ENCODE measurements at regions of chr15 and their contacts with region 1.

Region 1: GRCh38 chr15:43285609-43286037 is 18.9 kb upstream of the TGM5 start:
- DNase-seq: peak; percentile 80
- H3K4me3 ChIP-seq: peak overlapping the region in 1 of 2 experiments; percentile 4; a peak in 1 of 4 replicates
- H3K27ac ChIP-seq: no peak overlapping the region
- H3K4me1 ChIP-seq: no peaks in the 10 kb centered on the region
- H3K27me3 ChIP-seq: peaks cover 16% of the 10 kb centered on the region; the same call in 1 of the 2 replicates
- CTCF ChIP-seq: peak; percentile 87
- EP300 ChIP-seq: no peak
- RAD21 ChIP-seq: peak; percentile 98

Region 2: GRCh38 chr15:43185157-43186017 is 100.2 kb before region 1 on chr15 and contains the start of gene CCNDBP1:
- CTCF ChIA-PET with region 1: interaction called, 44 read pairs
- POLR2A ChIA-PET with region 1: no interaction called
- DNase-seq: peak; percentile 97
- H3K4me3 ChIP-seq: peak within 1 kb of the TSS; percentile 75 to 88
- H3K27ac ChIP-seq: peak within 1 kb of the TSS; percentile 47 to 89
- H3K4me1 ChIP-seq: peaks cover 0 to 10% of the 10 kb centered on the region in 2 experiments; a peak in 3 of 4 replicates
- H3K27me3 ChIP-seq: no peaks in the 10 kb centered on the region
- CTCF ChIP-seq: peak; percentile 59
- EP300 ChIP-seq: no peak
- RAD21 ChIP-seq: no peak
- polyA plus RNA-seq, gene CCNDBP1: 63.6 and 81.7 TPM in 2 replicates

Region 3: DNA sequence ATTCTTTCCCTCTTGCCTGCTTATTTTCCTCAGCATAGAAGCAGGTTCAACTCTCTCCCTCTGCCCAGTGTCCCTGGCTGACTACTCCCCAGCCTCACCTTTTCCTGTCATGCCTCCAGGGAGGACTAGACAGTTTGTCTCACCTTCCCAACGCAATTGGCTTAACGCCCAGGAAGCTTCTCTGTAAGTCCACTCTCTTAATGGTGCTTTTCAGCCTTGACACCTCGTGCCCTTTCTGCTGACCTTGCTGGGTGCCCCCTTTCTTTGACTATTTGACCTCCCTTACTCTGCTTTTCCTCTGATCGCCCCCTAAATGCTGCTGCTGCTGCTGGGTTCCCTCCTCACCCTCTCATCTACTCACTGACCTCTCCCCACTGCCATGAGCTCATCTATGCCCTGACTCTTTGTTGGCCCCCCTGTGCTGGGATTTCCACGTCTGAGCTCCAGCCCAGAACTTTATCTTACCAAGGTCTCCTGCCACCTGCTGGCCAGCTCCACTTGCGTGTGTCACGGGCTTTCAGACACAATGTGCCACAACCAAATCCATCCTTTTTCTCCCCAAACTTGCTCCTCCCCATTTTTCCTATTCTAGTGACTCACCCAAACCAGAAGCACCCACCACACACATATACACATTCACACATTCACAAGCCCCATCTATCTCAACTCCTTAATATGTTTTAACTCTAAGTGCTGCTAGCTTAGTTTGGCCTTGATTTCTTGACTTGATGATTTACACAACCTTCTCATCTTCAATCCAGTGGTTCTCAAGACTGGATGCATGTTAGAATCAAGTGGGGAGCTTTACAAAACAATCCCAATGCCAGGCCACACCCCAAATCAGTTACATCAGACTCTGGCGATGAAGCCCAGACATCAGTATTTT is 81.4 kb before region 1 on chr15:
- CTCF ChIA-PET with region 1: interaction called, 70 read pairs
- POLR2A ChIA-PET with region 1: no interaction called
- DNase-seq: peak; percentile 70
- H3K4me3 ChIP-seq: no peak overlapping the region
- H3K27ac ChIP-seq: no peak overlapping the region
- H3K4me1 ChIP-seq: peaks cover 0 to 5% of the 10 kb centered on the region in 2 experiments; a peak in 1 of 4 replicates
- H3K27me3 ChIP-seq: no peaks in the 10 kb centered on the region
- CTCF ChIP-seq: peak; percentile 73
- EP300 ChIP-seq: no peak
- RAD21 ChIP-seq: peak; percentile 52

Region 4: GRCh38 chr15:43225201-43225949 is 60.2 kb before region 1 on chr15:
- CTCF ChIA-PET with region 1: interaction called, 167 read pairs
- POLR2A ChIA-PET with region 1: interaction called, 3 read pairs
- DNase-seq: peak; percentile 71
- H3K4me3 ChIP-seq: no peak overlapping the region; a peak in 1 of 4 replicates
- H3K27ac ChIP-seq: no peak overlapping the region
- H3K4me1 ChIP-seq: peaks cover 0 to 7% of the 10 kb centered on the region in 2 experiments; a peak in 1 of 4 replicates
- H3K27me3 ChIP-seq: peaks cover 18% of the 10 kb centered on the region; the same call in 1 of the 2 replicates
- CTCF ChIP-seq: peak; percentile 71
- EP300 ChIP-seq: no peak
- RAD21 ChIP-seq: peak; percentile 72

Region 5: DNA sequence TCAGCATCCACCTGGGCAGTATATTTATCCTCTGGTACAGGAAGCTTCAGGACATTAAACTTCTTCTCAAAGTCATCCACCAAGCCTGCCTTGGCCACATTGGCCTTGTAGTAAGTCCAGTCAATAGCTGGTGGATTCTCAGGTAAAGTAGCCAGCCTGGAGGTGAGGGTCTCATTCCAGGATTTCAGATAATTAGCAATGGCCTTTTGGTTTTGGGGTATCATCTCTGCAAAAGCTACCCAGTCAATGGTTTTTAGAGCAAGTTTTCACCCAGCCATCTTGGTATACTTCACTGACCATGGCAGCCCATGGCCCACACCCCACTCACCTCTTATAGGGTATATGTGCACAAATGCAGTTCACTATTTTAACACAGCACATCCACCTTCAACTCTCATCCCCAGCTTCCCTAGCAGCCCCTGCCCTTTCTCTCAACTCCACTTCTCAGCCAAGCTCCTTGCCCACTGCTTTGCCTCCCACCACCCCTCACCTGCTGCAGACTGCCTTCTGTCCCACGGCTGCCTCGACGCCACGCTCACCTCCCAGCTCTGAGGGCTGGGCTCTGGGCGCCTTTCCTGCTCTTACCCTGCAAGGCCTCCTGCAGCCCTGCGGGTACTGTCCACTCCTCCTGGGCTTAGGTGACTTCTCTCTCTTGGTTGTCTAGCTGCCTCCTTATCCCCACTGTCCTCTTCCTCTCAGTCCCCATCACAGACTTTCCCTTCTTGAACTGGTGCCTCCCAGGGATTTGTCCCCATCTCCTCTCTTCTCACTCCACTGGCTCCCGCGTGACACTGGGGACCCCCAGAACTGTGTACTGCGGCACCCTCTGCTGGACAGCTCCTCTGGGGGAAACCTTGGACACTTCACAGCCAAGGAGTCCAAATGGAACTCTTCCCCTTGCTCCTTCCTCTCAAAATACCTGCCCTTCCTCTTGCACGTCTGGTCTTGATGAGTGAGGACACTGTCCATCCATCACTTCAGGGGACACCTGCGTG is 17.2 kb before region 1 on chr15:
- CTCF ChIA-PET with region 1: interaction called, 19 read pairs
- POLR2A ChIA-PET with region 1: no interaction called
- DNase-seq: peak; percentile 59
- H3K4me3 ChIP-seq: no peak overlapping the region
- H3K27ac ChIP-seq: no peak overlapping the region
- H3K4me1 ChIP-seq: no peaks in the 10 kb centered on the region
- H3K27me3 ChIP-seq: peaks cover 25% of the 10 kb centered on the region; the same call in 1 of the 2 replicates
- CTCF ChIP-seq: 0 out of 2 replicates have a peak, but pooled peaks have one; percentile 19
- EP300 ChIP-seq: no peak
- RAD21 ChIP-seq: peak; percentile 70

Region 6: DNA sequence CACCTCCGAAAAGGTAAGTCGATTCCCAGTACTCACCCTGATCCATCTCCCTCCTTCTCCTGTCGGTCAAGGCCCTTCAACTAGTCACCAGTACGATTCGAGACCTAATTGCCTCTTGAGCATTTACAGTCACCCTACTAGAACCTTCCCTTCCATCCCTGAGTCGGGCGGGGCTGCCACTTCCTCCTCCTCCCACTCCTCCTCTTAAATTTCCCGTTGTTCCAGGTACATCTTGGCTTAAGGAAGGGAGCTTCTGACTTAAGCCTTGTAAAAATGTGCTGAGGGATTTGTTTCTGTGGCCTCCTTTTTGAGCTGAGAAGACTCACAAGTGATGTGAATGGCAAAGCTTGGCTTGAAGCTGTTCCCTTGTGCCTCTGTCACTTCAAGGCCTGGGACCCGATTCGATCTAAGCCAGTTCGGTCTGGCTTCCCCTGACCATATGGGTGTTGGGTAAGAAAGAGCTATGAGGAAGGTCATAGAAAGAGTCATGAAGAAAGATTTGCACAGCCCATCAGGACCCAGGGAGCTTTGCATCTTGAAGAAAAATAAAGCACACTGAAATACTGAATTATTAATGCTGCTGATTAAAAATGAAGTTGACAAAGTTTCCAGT is 16.7 kb after region 1 on chr15:
- CTCF ChIA-PET with region 1: interaction called, 23 read pairs
- POLR2A ChIA-PET with region 1: no interaction called
- DNase-seq: no peak
- H3K4me3 ChIP-seq: no peak within 1 kb of the TSS
- H3K27ac ChIP-seq: no peak within 1 kb of the TSS
- H3K4me1 ChIP-seq: no peaks in the 10 kb centered on the region
- H3K27me3 ChIP-seq: peaks cover 4% of the 10 kb centered on the region; the same call in 1 of the 2 replicates
- CTCF ChIP-seq: no peak
- EP300 ChIP-seq: no peak
- RAD21 ChIP-seq: no peak

Measured in SK-N-SH (cell line).